ENCODE measurements at regions of chr15 and their contacts with region 1.

Region 1: DNA sequence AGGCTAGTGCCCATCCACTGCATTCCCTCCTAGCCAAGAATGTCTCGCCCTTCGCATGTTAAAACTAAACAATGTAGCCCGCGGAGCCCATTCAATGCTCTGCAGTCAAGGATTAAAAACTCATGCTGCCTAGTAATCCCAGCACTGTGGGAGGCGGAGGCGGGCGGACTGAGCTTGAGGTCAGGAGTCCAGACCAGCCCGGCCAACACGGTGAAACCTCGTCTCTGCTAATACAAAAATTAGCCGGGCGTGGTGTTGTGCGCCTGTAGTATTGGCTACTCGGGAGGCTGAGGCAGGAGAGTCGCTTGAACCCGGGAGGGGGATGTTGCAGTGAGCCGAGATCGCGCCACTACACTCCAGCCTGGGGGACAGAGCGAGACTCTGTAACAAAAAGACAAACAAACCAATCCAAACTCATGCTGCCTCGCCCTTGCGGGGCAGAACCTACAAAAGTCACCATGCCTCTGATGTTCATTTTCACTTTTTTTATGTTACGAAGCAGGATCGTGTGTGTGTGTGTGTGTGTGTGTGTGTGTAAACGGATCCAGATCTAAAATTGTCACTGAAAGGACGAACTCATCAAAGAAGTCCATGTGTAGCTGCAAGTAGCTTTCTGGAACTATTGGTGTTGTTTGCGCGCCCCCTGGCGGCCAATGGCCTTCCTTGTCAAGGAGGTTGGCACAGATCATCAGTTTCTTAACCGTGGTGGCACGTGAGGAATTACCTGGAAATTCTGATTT is 54.8 kb upstream of the SPESP1 start:
- DNase-seq: peak; percentile 90 to 95 (median 93)
- H3K4me3 ChIP-seq: peak overlapping the region in 5 of 7 experiments; percentile 33 to 70 (median 63)
- H3K27ac ChIP-seq: no peak overlapping the region
- H3K4me1 ChIP-seq: peaks cover 0 to 5% (median 2%) of the 10 kb centered on the region in 4 experiments
- H3K27me3 ChIP-seq: peaks cover 0 to 2% (median 0%) of the 10 kb centered on the region in 5 experiments

Region 2: GRCh38 chr15:68550481-68551295 is 324.9 kb before region 1 on chr15:
- CTCF ChIA-PET with region 1: interaction called, 22 read pairs
- POLR2A ChIA-PET with region 1: no interaction called
- DNase-seq: peak; percentile 59 to 76 (median 66)
- H3K4me3 ChIP-seq: no peak overlapping the region
- H3K27ac ChIP-seq: no peak overlapping the region
- H3K4me1 ChIP-seq: no peaks in the 10 kb centered on the region
- H3K27me3 ChIP-seq: peaks cover 0 to 9% (median 0%) of the 10 kb centered on the region in 5 experiments

Region 3: DNA sequence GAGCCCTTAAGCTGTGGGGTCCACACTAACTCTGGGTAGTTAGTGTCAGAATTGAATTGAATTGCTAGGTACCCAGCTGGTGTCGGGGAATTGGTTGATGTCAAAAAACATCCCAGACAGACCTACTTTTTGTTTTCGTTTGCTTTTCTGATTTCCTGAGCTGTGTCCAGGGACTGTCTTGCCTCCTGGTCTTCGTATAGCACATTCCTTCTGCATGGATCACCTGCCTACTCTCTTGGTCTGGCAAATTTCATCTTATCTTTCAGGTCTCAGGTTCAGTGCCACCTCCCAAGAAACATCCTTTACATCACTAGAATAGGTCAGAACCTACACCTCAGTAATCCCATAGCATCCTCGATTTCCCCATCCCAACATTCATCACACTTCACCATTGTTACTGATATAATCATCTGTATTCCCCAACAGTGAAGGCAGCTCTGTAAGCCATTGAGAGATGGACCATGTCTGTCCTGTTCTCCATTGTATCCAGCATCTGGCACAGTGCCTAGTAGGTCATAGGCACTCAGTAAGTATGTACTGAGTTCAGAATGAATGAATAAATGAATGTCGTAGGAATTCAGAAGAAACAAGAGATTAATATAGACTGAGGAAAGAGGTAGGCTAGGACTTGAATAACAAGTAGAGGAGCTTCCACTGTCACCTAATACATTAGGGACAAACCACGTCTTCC is 136.0 kb before region 1 on chr15:
- CTCF ChIA-PET with region 1: interaction called, 17 read pairs
- POLR2A ChIA-PET with region 1: no interaction called
- DNase-seq: no peak
- H3K4me3 ChIP-seq: no peak overlapping the region
- H3K27ac ChIP-seq: no peak overlapping the region
- H3K4me1 ChIP-seq: peaks cover 5 to 13% (median 7%) of the 10 kb centered on the region in 4 experiments
- H3K27me3 ChIP-seq: no peaks in the 10 kb centered on the region

Region 4: DNA sequence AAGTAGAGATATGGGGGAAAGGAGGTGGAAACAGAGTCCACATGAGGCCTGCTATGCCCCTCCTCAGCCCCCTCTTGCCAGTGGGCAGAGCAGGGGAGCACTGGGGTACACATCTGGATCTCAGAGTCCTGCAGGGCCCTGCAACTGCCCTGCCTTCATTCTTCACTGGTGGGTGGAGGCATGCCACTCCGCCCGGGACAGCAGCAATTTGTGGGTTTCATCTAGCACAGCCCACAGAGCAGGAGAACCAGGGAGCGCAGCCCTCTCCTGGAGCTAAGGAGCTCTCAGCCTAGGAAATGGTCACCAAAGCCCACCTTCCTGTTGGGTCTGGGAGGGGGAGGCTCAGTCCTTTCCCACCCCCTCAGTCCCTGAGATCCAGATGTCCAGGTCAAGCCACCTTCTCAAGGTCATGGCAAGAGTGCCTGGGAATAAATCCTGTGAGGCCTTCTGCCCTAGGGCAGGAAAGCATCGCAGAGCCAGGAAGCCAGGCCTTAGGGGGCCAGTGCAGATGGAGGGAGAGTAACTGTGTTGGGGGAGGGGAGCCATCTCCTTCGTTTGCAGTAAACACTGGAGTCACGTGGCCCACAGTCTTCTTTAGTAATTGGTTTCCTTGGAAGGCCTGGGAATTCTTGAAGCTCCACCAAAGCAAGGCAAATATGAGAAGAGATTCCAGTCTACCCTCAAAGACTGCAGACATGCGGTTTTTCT is 85.9 kb before region 1 on chr15:
- CTCF ChIA-PET with region 1: interaction called, 54 read pairs
- POLR2A ChIA-PET with region 1: no interaction called
- DNase-seq: peak in 1 of 3 donors; percentile 25
- H3K4me3 ChIP-seq: peak overlapping the region in 2 of 7 experiments; percentile 7 to 29
- H3K27ac ChIP-seq: peak overlapping the region; percentile 69 to 78
- H3K4me1 ChIP-seq: peaks cover 43 to 95% (median 89%) of the 10 kb centered on the region in 4 experiments
- H3K27me3 ChIP-seq: no peaks in the 10 kb centered on the region

Region 5: DNA sequence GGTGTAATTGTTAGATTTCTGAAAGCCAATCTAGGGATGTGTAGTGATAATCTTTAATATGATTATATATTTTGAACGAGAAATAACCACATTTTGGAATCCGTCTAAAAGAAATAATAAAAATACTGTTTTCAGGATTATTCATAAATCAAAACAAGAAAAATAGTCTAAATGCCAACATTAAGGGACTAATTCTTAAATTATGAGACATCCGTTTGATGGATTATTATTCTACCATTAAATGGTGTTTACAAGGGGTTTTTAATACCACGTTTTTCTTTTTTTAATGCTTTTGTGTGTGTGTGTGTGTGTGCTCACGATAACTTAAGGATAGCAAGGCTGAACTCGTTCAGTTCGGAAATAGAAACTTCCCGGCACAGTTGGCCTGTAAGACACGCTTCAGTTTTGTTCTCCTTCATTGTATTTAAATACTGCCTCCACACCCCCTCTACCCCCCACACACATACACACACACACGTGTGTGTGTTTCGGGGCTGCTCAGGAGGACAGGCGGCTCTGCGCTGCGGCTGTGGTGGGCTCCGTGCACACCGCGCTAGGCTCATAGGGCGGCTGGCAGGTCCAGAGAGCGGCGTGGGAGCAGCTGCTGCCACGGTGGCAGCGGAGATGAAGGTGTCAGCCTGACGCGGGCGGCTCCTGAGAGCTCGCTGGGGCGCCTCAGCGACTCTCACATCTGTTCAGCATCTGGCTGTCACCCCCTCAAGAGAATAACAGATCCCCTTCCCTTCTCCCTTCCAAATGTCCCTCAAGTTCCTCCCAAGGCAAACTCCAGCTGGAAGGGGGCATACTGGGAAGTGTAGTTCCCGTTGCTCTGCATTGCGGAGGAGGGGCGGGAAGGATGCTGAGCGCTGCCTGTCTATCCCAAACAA is 31.9 kb before region 1 on chr15:
- CTCF ChIA-PET with region 1: interaction called, 10 read pairs
- POLR2A ChIA-PET with region 1: no interaction called
- DNase-seq: peak in 2 of 3 donors; percentile 41 to 54
- H3K4me3 ChIP-seq: peak overlapping the region in 4 of 7 experiments; percentile 19 to 55 (median 39)
- H3K27ac ChIP-seq: no peak overlapping the region
- H3K4me1 ChIP-seq: peaks cover 3 to 10% (median 7%) of the 10 kb centered on the region in 4 experiments
- H3K27me3 ChIP-seq: peaks cover 6 to 60% (median 16%) of the 10 kb centered on the region in 5 experiments

Region 6: DNA sequence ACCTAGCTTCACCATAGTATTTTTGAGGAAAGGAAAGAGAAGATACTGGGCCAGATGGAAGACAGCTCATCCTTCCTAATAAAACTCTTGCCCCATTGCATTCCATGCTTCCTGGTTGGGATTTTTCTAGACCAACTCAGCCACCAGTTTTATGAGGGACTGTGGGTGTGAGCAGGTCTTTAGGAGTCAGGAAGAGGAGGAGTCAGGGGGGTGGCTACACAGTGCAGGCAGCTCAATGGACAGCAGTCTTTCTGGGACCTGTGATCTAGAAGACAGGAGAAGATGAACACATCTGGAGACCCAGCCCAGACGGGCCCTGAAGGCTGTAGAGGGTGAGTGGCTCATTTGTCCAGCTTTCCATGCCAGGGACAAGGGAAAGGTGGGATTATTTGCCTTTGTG is 138.9 kb after region 1 on chr15 and contains the start of gene NOX5:
- CTCF ChIA-PET with region 1: no interaction called
- POLR2A ChIA-PET with region 1: no interaction called
- DNase-seq: no peak
- H3K4me3 ChIP-seq: no peak within 1 kb of the TSS
- H3K27ac ChIP-seq: no peak within 1 kb of the TSS
- H3K4me1 ChIP-seq: no peaks in the 10 kb centered on the region
- H3K27me3 ChIP-seq: no peaks in the 10 kb centered on the region